AG04449 (cell line): ENCODE measurements at regions of chr3 and their contacts with region 1.

Region 1: DNA sequence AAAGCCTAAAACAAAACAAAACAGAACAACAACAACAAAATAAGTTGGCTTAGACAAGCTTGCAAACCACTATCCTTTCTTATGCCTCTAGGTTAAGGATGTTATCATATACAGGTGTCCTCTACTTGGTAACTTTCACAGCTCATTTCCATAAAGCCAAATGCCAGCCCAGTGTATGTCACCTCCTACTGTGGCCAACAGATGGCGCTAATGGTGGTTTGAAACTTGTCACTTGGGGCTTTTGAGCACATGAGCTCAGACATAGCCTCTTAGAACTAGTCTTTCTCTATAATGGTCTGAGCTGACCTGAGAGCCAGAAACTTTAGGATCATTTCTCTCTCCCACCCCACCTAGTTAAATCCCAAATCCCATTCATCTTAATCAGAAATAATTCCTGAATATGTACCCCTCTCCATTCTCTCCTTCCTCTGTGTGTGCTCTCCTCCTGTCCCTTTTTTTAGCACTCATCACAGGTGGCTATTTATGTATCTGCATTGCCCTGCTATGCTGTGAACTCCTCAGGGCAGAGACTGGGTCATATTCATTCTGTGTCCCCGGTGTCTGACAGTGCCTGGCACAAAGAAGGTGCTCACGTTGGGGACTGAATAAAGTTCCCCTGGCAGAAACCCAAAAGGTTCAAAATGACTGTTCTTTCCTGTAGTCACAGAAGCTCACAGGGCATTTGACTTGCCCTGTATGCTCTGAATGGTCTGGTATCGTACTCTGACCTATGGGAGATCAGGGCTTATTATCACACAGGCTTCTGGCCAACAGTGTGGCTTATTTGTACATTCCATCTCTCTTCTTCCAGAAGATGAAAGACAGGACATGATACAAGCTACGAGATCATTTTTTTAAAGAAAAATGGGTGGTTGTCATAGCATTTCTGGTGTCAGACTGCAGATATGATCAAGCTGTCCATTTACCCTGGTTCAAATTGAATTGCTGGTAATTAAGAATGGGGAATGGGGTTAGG is 319.3 kb upstream of the AZI2 start:
- DNase-seq: peak; percentile 2
- H3K4me3 ChIP-seq: no peak overlapping the region
- CTCF ChIP-seq: peak; percentile 90

Region 2: GRCh38 chr3:28651159-28651558 is 16.8 kb before region 1 on chr3:
- CTCF ChIA-PET with region 1: interaction called, 19 read pairs
- POLR2A ChIA-PET with region 1: no interaction called
- DNase-seq: no peak
- H3K4me3 ChIP-seq: no peak overlapping the region
- CTCF ChIP-seq: no peak

Region 3: GRCh38 chr3:29011441-29011840 is 343.5 kb after region 1 on chr3:
- CTCF ChIA-PET with region 1: no interaction called
- POLR2A ChIA-PET with region 1: no interaction called
- DNase-seq: no peak
- H3K4me3 ChIP-seq: no peak overlapping the region
- CTCF ChIP-seq: no peak